ENCODE measurements at regions of chr11 and their contacts with region 1.

Region 1: DNA sequence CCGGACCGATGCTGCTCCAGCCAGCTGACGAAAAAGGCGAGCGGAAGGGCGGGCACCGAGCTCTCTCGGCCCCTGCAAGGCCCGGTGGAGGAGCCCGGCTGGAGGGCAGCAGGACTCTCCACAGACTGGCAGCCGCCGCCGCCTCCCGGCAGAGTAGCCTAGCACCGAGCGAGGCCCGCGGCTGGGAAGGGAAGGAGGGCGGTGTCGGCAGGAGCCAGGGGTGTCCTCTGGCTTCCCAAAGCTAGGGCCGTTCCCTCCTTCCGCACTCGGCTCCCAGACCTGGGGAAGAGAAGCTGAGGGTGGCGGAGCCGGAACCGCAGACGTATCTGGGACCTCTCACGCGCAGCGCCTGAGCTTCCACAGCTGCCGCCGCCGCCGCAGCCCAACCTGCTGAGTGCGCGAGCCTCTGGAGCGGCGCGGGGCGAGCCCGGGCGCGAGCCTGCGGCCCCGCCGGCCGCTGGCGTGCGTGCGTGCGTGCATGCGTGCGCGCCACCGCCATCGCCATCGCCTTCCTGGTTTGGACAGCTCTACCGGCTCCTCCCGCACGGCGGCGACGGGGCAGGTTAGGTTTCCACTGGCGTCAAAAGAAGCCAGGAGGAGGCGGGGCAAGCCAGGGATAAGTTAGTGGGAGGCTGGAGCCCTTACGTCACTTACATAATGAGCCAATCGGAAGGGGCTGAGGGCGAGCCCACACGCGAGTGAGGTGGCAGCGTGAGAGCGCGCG is at the start of gene RAB6A:
- DNase-seq: peak; percentile 100
- ATAC-seq: peak; percentile 96 to 97
- H3K4me3 ChIP-seq: peak within 1 kb of the TSS; percentile 93 to 100 (median 95)
- H3K27ac ChIP-seq: peak within 1 kb of the TSS; percentile 93 to 100 (median 98)
- H3K4me1 ChIP-seq: peaks cover 20 to 21% of the 10 kb centered on the region in 2 donors
- H3K27me3 ChIP-seq: no peaks in the 10 kb centered on the region
- CTCF ChIP-seq: peak; percentile 41 to 59 (median 54)
- POLR2A ChIP-seq: peak; percentile 91 to 94
- total RNA-seq, gene RAB6A: 95.5 to 124 (median 110) TPM

Region 2: DNA sequence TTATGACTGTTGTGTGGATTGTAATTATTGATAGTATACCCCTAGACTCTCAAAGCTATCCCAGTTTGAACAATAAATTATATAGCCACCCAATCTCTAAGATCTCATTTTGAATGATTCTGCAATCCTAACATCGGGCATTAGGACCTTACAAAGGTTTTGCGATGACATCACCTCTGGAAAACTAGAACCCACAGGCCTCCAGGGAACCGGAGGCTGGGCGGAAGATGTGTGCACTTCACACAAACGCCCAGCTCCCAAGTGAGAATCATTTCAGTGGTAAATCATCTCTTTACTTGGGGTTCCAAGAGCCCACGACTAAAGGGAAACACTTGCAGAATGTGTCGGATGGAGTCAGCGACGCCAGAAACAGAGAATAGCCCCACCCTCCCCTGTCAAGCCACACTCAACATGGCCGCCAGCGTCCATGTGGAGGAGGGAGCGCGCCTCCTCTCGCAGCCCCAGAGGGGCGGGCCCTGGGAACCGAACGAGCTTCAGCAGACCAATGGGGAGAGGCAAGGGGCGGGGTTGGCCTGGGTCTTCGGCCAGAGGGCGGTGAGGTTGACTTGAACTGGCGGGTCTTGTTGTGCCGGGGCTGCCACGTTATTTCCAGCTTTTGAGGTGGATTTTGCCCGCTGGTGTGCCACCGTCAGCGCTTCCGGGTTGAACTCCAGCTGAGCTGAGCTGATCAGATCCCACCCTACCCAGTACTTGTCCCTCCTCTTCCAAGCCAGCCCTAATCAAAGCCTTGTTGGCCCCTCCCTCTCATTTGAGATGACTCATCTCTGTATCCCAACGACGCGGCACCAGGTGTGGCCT is 18.5 kb after region 1 on chr11:
- in situ Hi-C with region 1: no loop called
- intact Hi-C with region 1: loop called (anchors 1 kb)
- DNase-seq: peak; percentile 98
- ATAC-seq: peak; percentile 97 to 98
- H3K4me3 ChIP-seq: peak overlapping the region; percentile 50 to 70 (median 68)
- H3K27ac ChIP-seq: peak overlapping the region; percentile 85 to 92 (median 87)
- H3K4me1 ChIP-seq: peaks cover 0 to 4% of the 10 kb centered on the region in 2 donors
- H3K27me3 ChIP-seq: no peaks in the 10 kb centered on the region
- CTCF ChIP-seq: no peak
- POLR2A ChIP-seq: peak; percentile 50 to 54

Region 3: GRCh38 chr11:73792584-73792983 is 31.7 kb after region 1 on chr11:
- in situ Hi-C with region 1: no loop called
- intact Hi-C with region 1: no loop called
- DNase-seq: no peak
- ATAC-seq: no peak
- H3K4me3 ChIP-seq: no peak overlapping the region
- H3K27ac ChIP-seq: no peak overlapping the region
- H3K4me1 ChIP-seq: peaks cover 15 to 17% of the 10 kb centered on the region in 2 donors
- H3K27me3 ChIP-seq: no peaks in the 10 kb centered on the region
- CTCF ChIP-seq: no peak
- POLR2A ChIP-seq: no peak

Measured in gastrocnemius medialis (tissue), 4 donors.